Endothelial cell of umbilical vein (primary cell): ENCODE measurements at regions of chr19 and their contacts with region 1.

Region 1: GRCh38 chr19:44570984-44571684 is 41.7 kb upstream of the CEACAM20 start:
- DNase-seq: peak; percentile 82
- H3K4me3 ChIP-seq: no peak overlapping the region
- H3K27ac ChIP-seq: no peak overlapping the region
- H3K4me1 ChIP-seq: no peaks in the 10 kb centered on the region
- H3K27me3 ChIP-seq: peaks cover 7 to 18% of the 10 kb centered on the region in 2 experiments
- CTCF ChIP-seq: peak; percentile 71 to 82
- POLR2A ChIP-seq: no peak

Region 2: DNA sequence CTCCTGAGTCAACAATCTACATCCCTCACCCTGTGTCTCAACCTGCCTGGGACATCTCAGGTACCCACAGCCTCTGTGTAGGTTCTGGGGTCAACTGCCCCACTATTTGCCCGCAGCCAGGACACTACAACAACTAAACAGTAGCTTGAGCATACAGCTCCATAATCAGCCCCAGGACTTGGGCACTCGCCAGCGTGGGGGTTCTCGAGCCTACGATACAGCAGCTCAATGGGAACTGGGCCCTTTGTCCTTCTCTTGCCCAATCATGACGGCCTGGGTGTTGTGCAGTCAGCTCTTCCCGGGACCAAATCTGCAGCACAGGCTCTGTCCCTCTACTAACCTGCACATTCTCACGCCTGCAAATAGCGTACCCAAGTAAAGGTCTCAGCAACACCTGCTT is 72.1 kb before region 1 on chr19:
- CTCF ChIA-PET with region 1: no interaction called
- POLR2A ChIA-PET with region 1: no interaction called
- dilution Hi-C with region 1: no loop called
- intact Hi-C with region 1: no loop called
- DNase-seq: no peak
- H3K4me3 ChIP-seq: no peak overlapping the region
- H3K27ac ChIP-seq: no peak overlapping the region
- H3K4me1 ChIP-seq: peaks cover 11% of the 10 kb centered on the region
- H3K27me3 ChIP-seq: no peaks in the 10 kb centered on the region
- CTCF ChIP-seq: no peak
- POLR2A ChIP-seq: no peak

Region 3: GRCh38 chr19:44509478-44509877 is 61.7 kb before region 1 on chr19:
- CTCF ChIA-PET with region 1: interaction called, 10 read pairs
- POLR2A ChIA-PET with region 1: no interaction called
- dilution Hi-C with region 1: no loop called
- intact Hi-C with region 1: no loop called
- DNase-seq: no peak
- H3K4me3 ChIP-seq: no peak overlapping the region
- H3K27ac ChIP-seq: no peak overlapping the region
- H3K4me1 ChIP-seq: no peaks in the 10 kb centered on the region
- H3K27me3 ChIP-seq: peaks cover 8 to 17% of the 10 kb centered on the region in 2 experiments
- CTCF ChIP-seq: no peak
- POLR2A ChIP-seq: no peak

Region 4: GRCh38 chr19:44587963-44588770 is 17.0 kb after region 1 on chr19:
- CTCF ChIA-PET with region 1: interaction called, 60 read pairs
- POLR2A ChIA-PET with region 1: interaction called, 4 read pairs
- dilution Hi-C with region 1: no loop called
- intact Hi-C with region 1: no loop called
- DNase-seq: peak; percentile 77
- H3K4me3 ChIP-seq: peak overlapping the region in 1 of 3 experiments; percentile 1
- H3K27ac ChIP-seq: peak overlapping the region; percentile 93
- H3K4me1 ChIP-seq: peaks cover 55% of the 10 kb centered on the region
- H3K27me3 ChIP-seq: no peaks in the 10 kb centered on the region
- CTCF ChIP-seq: peak in 1 of 2 donors; percentile 12
- POLR2A ChIP-seq: no peak

Region 5: GRCh38 chr19:44635581-44636438 is 64.7 kb after region 1 on chr19:
- CTCF ChIA-PET with region 1: interaction called, 19 read pairs
- POLR2A ChIA-PET with region 1: no interaction called
- dilution Hi-C with region 1: no loop called
- intact Hi-C with region 1: no loop called
- DNase-seq: no peak
- H3K4me3 ChIP-seq: no peak overlapping the region
- H3K27ac ChIP-seq: no peak overlapping the region
- H3K4me1 ChIP-seq: peaks cover 12% of the 10 kb centered on the region
- H3K27me3 ChIP-seq: no peaks in the 10 kb centered on the region
- CTCF ChIP-seq: no peak
- POLR2A ChIP-seq: no peak

Region 6: DNA sequence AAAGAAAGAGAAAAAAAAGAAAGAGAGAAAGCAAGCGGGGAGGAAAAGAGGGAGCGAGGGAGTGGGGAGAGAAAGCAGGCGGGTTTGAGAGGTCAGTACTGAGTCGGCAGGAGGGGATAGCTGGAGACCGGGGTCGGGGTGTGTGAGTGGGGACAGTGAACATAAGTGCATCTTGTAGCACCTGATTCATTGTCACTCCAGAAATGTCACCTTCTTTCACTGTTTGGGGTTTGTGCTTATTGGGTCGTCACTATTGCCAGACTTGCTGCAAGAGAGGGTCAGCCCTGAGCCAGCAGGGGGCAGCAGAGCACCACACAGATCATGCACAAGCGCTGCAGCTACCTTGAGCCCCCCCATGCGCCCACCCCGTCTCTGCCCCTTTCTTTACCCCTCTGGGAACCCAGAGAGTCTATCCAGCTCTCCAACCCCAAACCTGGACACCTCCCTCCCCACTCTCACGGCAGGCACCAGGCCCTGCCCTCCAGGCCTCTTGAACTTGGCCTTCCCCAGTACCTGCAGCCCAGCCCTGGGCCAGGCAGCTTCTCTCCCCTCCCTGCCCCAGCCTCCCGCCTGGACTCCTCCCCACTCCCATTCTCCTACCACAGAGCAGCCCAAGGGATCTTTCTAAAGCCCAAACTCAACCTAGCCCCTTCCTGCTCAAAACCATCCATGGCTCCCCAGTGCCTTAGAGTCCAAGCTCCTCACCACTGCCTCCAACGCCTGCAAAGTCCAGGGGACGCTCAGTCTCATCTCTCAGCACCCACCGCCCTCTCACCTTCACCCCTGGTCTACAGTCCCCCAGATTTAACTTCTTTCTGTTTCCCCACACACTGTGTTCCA is 118.1 kb after region 1 on chr19:
- CTCF ChIA-PET with region 1: interaction called, 16 read pairs
- POLR2A ChIA-PET with region 1: interaction called, 11 read pairs
- dilution Hi-C with region 1: no loop called
- intact Hi-C with region 1: loop called (anchors 1 kb)
- DNase-seq: peak; percentile 70
- H3K4me3 ChIP-seq: no peak overlapping the region
- H3K27ac ChIP-seq: no peak overlapping the region
- H3K4me1 ChIP-seq: peaks cover 30% of the 10 kb centered on the region
- H3K27me3 ChIP-seq: no peaks in the 10 kb centered on the region
- CTCF ChIP-seq: peak; percentile 79 to 96
- POLR2A ChIP-seq: no peak

Region 7: DNA sequence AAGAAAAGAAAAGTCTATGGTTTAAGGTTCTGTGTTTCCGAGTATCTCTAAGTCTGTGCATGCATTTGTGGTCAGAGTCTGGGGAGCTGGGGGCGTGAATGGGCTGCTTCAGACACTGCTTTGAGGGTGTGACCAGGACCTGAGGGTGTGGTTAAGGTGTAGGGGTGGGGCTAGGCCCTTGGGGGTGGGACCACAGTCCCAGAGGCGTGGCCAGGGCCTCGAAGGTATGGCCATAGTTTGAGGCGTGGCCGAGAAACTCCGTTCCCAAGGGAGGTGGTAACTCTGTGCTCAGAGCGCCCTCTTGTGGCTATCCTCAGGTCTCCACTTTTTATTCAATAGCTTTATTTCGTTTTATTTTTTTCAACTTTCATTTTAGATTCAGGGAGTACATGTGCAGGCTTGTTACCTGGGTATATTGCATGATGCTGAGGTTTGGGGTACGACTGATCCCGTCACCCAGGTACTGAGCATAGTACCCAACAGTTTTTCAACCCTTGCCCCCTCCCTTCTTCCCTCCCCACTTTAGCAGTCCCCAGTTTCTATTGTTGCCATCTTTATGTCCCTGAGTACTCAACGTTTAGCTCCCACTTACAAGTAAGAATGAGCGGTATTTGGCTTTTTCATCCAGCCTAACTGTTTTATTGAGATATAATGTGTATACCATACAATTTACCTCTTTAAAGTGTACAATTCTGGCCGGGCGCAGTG is 199.6 kb after region 1 on chr19:
- CTCF ChIA-PET with region 1: interaction called, 81 read pairs
- POLR2A ChIA-PET with region 1: no interaction called
- dilution Hi-C with region 1: no loop called
- intact Hi-C with region 1: loop called (anchors 2 kb)
- DNase-seq: peak; percentile 95
- H3K4me3 ChIP-seq: no peak overlapping the region
- H3K27ac ChIP-seq: no peak overlapping the region
- H3K4me1 ChIP-seq: peaks cover 12% of the 10 kb centered on the region
- H3K27me3 ChIP-seq: no peaks in the 10 kb centered on the region
- CTCF ChIP-seq: peak; percentile 67 to 73
- POLR2A ChIP-seq: no peak

Region 8: GRCh38 chr19:44845612-44846454 is 274.7 kb after region 1 on chr19 and contains the start of gene NECTIN2:
- CTCF ChIA-PET with region 1: interaction called, 10 read pairs
- POLR2A ChIA-PET with region 1: no interaction called
- dilution Hi-C with region 1: no loop called
- intact Hi-C with region 1: loop called (anchors 2 kb)
- DNase-seq: peak; percentile 99
- H3K4me3 ChIP-seq: peak within 1 kb of the TSS; percentile 69 to 96 (median 83)
- H3K27ac ChIP-seq: peak within 1 kb of the TSS; percentile 99
- H3K4me1 ChIP-seq: peaks cover 35% of the 10 kb centered on the region
- H3K27me3 ChIP-seq: no peaks in the 10 kb centered on the region
- CTCF ChIP-seq: peak; percentile 83 to 85
- POLR2A ChIP-seq: peak; percentile 76
- total RNA-seq, gene NECTIN2: 205 and 211 TPM in 2 replicates